ENCODE measurements at regions of chr13 and their contacts with region 1.

Region 1: GRCh38 chr13:29362849-29363604 is 232.5 kb downstream of the SLC7A1 start:
- DNase-seq: peak; percentile 67
- H3K4me3 ChIP-seq: no peak overlapping the region
- H3K27ac ChIP-seq: no peak overlapping the region
- H3K4me1 ChIP-seq: no peaks in the 10 kb centered on the region
- CTCF ChIP-seq: peak; percentile 92

Region 2: GRCh38 chr13:28805193-28805819 is 557.7 kb before region 1 on chr13:
- CTCF ChIA-PET with region 1: no interaction called
- POLR2A ChIA-PET with region 1: no interaction called
- intact Hi-C with region 1: loop called (anchors 1 kb)
- DNase-seq: peak; percentile 35
- H3K4me3 ChIP-seq: no peak overlapping the region
- H3K27ac ChIP-seq: no peak overlapping the region
- H3K4me1 ChIP-seq: no peaks in the 10 kb centered on the region
- CTCF ChIP-seq: peak; percentile 82

Region 3: GRCh38 chr13:29081036-29081435 is 282.0 kb before region 1 on chr13:
- CTCF ChIA-PET with region 1: no interaction called
- POLR2A ChIA-PET with region 1: interaction called, 3 read pairs
- intact Hi-C with region 1: loop called (anchors 2 kb)
- DNase-seq: peak; percentile 71
- H3K4me3 ChIP-seq: no peak overlapping the region
- H3K27ac ChIP-seq: no peak overlapping the region
- H3K4me1 ChIP-seq: peaks cover 3% of the 10 kb centered on the region
- CTCF ChIP-seq: peak; percentile 59

Region 4: DNA sequence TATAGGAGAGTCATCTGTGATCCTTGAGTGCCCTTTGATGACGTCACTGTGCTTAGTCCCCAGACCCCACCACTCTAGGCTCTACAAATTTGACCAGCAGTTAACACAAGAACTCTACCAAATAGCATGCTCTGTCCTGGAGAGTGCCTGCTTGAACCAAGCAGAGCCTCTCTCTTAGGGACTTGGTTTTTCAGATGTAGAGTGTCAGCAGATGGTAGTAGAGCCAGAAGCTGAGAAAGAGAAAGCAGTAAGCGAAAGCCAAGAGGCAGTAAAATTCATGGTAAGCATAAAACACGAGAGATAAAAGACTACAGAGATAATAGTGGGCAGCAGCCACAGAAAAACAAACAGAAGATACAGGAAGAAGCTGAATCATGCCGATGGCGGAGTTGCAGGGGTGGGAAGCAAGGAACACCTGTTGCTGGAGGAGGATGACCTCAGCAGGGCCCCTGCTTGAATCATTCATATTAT is 39.2 kb after region 1 on chr13:
- CTCF ChIA-PET with region 1: no interaction called
- POLR2A ChIA-PET with region 1: no interaction called
- intact Hi-C with region 1: no loop called
- DNase-seq: no peak
- H3K4me3 ChIP-seq: no peak overlapping the region
- H3K27ac ChIP-seq: no peak overlapping the region
- H3K4me1 ChIP-seq: no peaks in the 10 kb centered on the region
- CTCF ChIP-seq: no peak